ENCODE measurements at regions of chr6 and their contacts with region 1.

Region 1: GRCh38 chr6:146857180-146857979 is 258.6 kb downstream of the ADGB start:
- DNase-seq: peak; percentile 92
- H3K4me3 Mint-ChIP-seq: peak overlapping the region; percentile 36
- H3K27ac Mint-ChIP-seq: peak overlapping the region; percentile 52
- H3K4me1 Mint-ChIP-seq: peaks cover 12% of the 10 kb centered on the region
- H3K27me3 Mint-ChIP-seq: no peaks in the 10 kb centered on the region

Region 2: GRCh38 chr6:145977881-145978280 is 879.5 kb before region 1 on chr6:
- intact Hi-C with region 1: no loop called
- DNase-seq: no peak
- H3K4me3 Mint-ChIP-seq: no peak overlapping the region
- H3K27ac Mint-ChIP-seq: no peak overlapping the region
- H3K4me1 Mint-ChIP-seq: no peaks in the 10 kb centered on the region
- H3K27me3 Mint-ChIP-seq: peaks cover 2% of the 10 kb centered on the region

Region 3: GRCh38 chr6:146876271-146877151 is 19.1 kb after region 1 on chr6:
- intact Hi-C with region 1: loop called (anchors 2 kb)
- DNase-seq: no peak
- H3K4me3 Mint-ChIP-seq: peak overlapping the region; percentile 24
- H3K27ac Mint-ChIP-seq: peak overlapping the region; percentile 83
- H3K4me1 Mint-ChIP-seq: peaks cover 16% of the 10 kb centered on the region
- H3K27me3 Mint-ChIP-seq: no peaks in the 10 kb centered on the region

Region 4: DNA sequence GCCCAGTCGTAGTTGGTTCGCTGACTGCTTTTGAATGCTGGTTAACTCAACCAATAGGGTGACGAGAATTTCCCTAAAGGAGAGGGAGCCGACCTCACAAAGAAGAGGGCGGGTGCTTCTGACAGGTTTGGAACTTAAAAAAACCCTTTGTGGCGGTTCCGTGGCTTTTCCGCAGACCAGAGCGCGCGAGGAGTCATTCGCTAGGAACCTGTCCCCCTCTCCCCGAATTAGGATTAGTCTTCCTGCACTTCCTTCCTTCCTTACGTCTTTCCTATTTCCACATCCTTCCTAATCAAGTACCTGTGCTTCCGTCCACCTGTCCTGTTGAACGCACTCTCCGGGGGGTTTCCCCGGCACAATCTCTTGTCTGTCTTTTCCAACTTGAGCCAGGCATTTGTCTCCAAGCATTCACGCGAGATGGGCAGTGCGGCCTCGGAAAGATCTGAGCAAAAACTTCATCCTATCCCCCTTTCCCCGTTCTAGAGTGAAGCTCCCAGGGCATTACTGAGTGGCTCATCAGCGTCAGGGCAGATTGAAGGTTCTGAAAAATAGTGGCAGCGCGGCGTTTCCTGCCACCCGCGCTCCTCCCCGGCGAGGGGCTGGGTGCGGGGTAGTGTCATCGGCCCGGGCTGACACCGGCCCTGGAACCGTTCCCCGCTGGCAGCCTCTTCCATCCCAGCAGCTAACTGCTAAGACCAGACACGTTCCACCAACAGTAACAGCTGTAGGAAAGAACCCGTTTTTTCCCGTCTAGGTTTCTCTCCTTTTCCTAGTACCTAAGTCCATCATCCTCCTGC is 345.3 kb after region 1 on chr6:
- intact Hi-C with region 1: loop called (anchors 2 kb)
- DNase-seq: peak; percentile 95
- H3K4me3 Mint-ChIP-seq: peak overlapping the region; percentile 98
- H3K27ac Mint-ChIP-seq: peak overlapping the region; percentile 93
- H3K4me1 Mint-ChIP-seq: peaks cover 32% of the 10 kb centered on the region
- H3K27me3 Mint-ChIP-seq: no peaks in the 10 kb centered on the region

Region 5: GRCh38 chr6:147382945-147383554 is 525.7 kb after region 1 on chr6:
- intact Hi-C with region 1: loop called (anchors 2 kb)
- DNase-seq: no peak
- H3K4me3 Mint-ChIP-seq: no peak overlapping the region
- H3K27ac Mint-ChIP-seq: no peak overlapping the region
- H3K4me1 Mint-ChIP-seq: peaks cover 6% of the 10 kb centered on the region
- H3K27me3 Mint-ChIP-seq: no peaks in the 10 kb centered on the region

Region 6: DNA sequence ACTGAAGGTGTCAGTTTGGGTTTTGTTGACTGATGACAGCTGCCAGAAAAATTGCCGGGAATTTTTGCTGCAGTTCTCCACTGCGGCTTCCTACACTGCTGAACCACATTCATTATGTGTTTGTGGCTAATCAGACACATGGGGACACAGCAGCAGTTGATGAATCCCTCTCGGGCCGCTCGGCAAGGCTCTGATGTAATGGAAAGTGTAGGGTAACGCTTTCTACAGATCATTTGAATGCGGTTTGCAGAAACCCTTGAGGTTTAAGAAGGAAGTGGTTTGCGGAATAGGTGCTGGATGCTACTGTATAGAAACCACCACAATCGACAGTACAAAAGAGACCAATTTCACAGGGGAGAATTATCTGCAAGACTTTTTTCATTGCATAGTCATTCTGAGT is 1346.6 kb after region 1 on chr6:
- intact Hi-C with region 1: loop called (anchors 10 kb)
- DNase-seq: peak; percentile 93
- H3K4me3 Mint-ChIP-seq: peak overlapping the region; percentile 44
- H3K27ac Mint-ChIP-seq: peak overlapping the region; percentile 88
- H3K4me1 Mint-ChIP-seq: peaks cover 17% of the 10 kb centered on the region
- H3K27me3 Mint-ChIP-seq: peaks cover 72% of the 10 kb centered on the region

Measured in activated CD4-positive, alpha-beta T cell treated with anti-CD3 and anti-CD28 coated beads, Interleukin-2, amount 10 ng/mL, durations not matched to agents 24 days and 14 days (primary cell).